Gastrocnemius medialis (tissue), 4 donors: ENCODE measurements at regions of chr14 and their contacts with region 1.

Region 1: DNA sequence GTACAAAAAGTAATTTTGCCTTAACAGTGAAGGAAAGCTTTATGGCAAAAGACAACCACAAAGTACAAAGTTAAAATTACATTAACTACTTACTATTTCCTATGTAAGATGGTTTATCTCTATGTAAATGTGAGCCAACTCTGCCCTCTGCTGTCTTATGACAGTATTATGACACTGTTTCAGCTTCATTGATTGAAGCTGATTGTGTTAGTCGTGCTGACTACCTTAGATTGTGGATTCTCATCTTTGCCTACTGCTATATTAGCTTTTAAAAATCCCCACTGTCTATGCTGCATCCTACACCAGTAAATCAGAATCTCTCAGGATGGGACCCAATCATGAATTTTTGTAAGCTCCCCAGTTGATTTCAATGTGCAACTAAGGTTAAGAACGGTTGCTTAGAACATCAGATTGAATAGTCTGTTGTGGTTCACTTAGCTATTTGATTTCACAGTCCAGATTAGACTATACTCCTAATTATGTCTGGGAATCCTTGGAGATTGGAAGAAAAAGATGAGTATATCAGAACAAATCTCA is 12.2 kb upstream of the SPTB start:
- DNase-seq: no peak
- ATAC-seq: peak; percentile 98
- H3K4me3 ChIP-seq: no peak overlapping the region
- H3K27ac ChIP-seq: peak overlapping the region in 1 of 4 donors; percentile 18
- H3K4me1 ChIP-seq: peaks cover 0 to 12% of the 10 kb centered on the region in 2 donors
- H3K27me3 ChIP-seq: no peaks in the 10 kb centered on the region
- CTCF ChIP-seq: peak; percentile 60 to 84 (median 70)
- POLR2A ChIP-seq: no peak

Region 2: GRCh38 chr14:64580467-64580866 is 311.4 kb before region 1 on chr14:
- in situ Hi-C with region 1: no loop called
- intact Hi-C with region 1: no loop called
- DNase-seq: no peak
- ATAC-seq: no peak
- H3K4me3 ChIP-seq: no peak overlapping the region
- H3K27ac ChIP-seq: peak overlapping the region; percentile 37 to 86 (median 63)
- H3K4me1 ChIP-seq: peaks cover 24% of the 10 kb centered on the region in 2 donors
- H3K27me3 ChIP-seq: no peaks in the 10 kb centered on the region
- CTCF ChIP-seq: no peak
- POLR2A ChIP-seq: no peak

Region 3: GRCh38 chr14:64764641-64765520 is 127.0 kb before region 1 on chr14:
- in situ Hi-C with region 1: no loop called
- intact Hi-C with region 1: loop called (anchors 5 kb)
- DNase-seq: peak in 1 of 2 donors; percentile 51
- ATAC-seq: peak in 1 of 2 donors; percentile 64
- H3K4me3 ChIP-seq: peak overlapping the region in 3 of 4 donors; percentile 16 to 37 (median 20)
- H3K27ac ChIP-seq: peak overlapping the region; percentile 39 to 74 (median 64)
- H3K4me1 ChIP-seq: peaks cover 16 to 27% of the 10 kb centered on the region in 2 donors
- H3K27me3 ChIP-seq: no peaks in the 10 kb centered on the region
- CTCF ChIP-seq: peak; percentile 74 to 89 (median 85)
- POLR2A ChIP-seq: no peak

Region 4: DNA sequence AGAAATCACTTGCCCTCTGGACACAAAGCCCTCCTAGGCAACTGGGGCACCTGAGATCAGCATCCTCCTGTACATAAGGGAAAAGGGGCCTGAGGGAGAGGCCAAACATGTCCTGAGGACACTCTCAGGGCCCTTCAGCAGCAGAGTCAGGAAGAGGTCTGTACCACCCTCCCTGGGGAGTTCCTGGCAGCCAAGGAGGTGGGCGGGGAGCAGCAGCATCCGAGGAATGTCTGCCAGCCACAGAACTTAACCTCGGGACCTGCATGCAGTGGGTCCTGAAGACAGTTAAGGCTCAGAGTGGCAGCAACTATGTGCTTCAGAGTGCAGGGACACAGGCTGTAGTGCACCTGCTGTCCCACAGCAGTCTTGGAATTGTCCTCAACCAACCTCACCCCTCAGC is 74.3 kb before region 1 on chr14:
- in situ Hi-C with region 1: loop called in 3 of 4 experiments (anchors 5 kb)
- intact Hi-C with region 1: loop called (anchors 5 kb)
- DNase-seq: no peak
- ATAC-seq: no peak
- H3K4me3 ChIP-seq: no peak overlapping the region
- H3K27ac ChIP-seq: peak overlapping the region in 1 of 4 donors; percentile 93
- H3K4me1 ChIP-seq: peaks cover 9 to 14% of the 10 kb centered on the region in 2 donors
- H3K27me3 ChIP-seq: no peaks in the 10 kb centered on the region
- CTCF ChIP-seq: no peak
- POLR2A ChIP-seq: no peak

Region 5: GRCh38 chr14:64928239-64929013 is 36.5 kb after region 1 on chr14:
- in situ Hi-C with region 1: no loop called
- intact Hi-C with region 1: no loop called
- DNase-seq: no peak
- ATAC-seq: no peak
- H3K4me3 ChIP-seq: no peak overlapping the region
- H3K27ac ChIP-seq: no peak overlapping the region
- H3K4me1 ChIP-seq: peaks cover 19 to 38% of the 10 kb centered on the region in 2 donors
- H3K27me3 ChIP-seq: no peaks in the 10 kb centered on the region
- CTCF ChIP-seq: no peak
- POLR2A ChIP-seq: no peak